Lower leg skin (tissue), 4 donors: ENCODE measurements at regions of chr1 and their contacts with region 1.

Region 1: GRCh38 chr1:47437447-47438164 is at the start of gene FOXD2:
- DNase-seq: peak; percentile 56 to 96
- H3K4me3 ChIP-seq: peak within 1 kb of the TSS; percentile 38
- CTCF ChIP-seq: peak in 2 of 3 donors; percentile 57 to 59
- POLR2A ChIP-seq: no peak
- total RNA-seq, gene FOXD2: 0.13 to 0.56 (median 0.45) TPM in 3 of 4 donors, not detected in the other

Region 2: DNA sequence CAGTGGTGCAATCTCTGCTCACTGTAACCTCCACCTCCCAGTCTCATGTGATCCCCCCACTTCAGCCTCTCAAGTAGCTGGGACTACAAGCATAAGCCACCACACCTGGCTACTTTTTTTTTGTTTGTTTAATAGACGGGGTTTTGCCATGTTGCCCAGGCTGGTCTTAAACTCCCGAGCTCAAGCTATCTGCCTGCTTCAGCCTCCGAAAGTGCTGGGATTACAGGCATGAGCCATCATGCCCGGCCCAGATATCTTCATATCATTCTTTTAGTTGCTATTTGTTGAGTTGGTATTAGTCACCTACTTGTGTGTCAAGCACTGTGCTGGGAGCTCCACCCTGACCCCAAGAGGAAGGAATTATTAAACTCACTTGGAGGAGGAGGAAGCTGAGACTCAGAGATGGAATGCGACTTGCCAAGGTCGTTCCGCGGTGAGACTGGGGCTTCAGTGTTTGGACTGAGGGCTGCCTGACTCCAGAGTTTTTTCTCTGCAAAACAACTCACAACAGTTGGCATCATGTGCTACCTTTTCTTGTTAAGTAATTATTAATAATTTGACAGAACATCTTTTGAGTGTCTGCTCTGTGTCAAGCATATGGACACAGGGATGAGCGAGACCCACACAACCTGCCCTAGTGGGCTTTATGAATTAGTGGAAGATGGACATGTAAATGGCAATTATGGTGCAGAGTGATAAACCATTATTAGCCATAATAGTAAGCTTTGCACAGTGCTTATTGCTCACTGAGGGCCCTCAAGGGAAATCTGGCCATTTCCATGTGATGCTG is 132.3 kb after region 1 on chr1:
- intact Hi-C with region 1: loop called (anchors 10 kb)
- DNase-seq: peak in 1 of 2 donors; percentile 65
- H3K4me3 ChIP-seq: no peak overlapping the region
- CTCF ChIP-seq: no peak
- POLR2A ChIP-seq: no peak